A549 (cell line): ENCODE measurements at regions of chr11 and their contacts with region 1.

Region 1: GRCh38 chr11:19903620-19904069 is 191.0 kb downstream of the NAV2 start:
- DNase-seq: peak; percentile 52 to 75
- ATAC-seq: peak; percentile 80 to 93; a peak in 5 of 6 replicates
- H3K4me3 ChIP-seq: no peak overlapping the region
- H3K27ac ChIP-seq: no peak overlapping the region
- H3K4me1 ChIP-seq: no peaks in the 10 kb centered on the region
- CTCF ChIP-seq: peak; percentile 92
- EP300 ChIP-seq: no peak
- POLR2A ChIP-seq: no peak
- RAD21 ChIP-seq: peak; percentile 92 to 95

Region 2: GRCh38 chr11:19071255-19071654 is 832.4 kb before region 1 on chr11:
- CTCF ChIA-PET with region 1: interaction called, 11 read pairs
- POLR2A ChIA-PET with region 1: no interaction called
- DNase-seq: peak; percentile 77 to 90
- ATAC-seq: peak; percentile 94 to 98
- H3K4me3 ChIP-seq: 0 out of 3 replicates have a peak overlapping the region, but pooled peaks have one; percentile 18
- H3K27ac ChIP-seq: no peak overlapping the region
- H3K4me1 ChIP-seq: no peaks in the 10 kb centered on the region
- CTCF ChIP-seq: peak; percentile 99
- EP300 ChIP-seq: no peak
- POLR2A ChIP-seq: no peak
- RAD21 ChIP-seq: peak; percentile 93 to 95

Region 3: DNA sequence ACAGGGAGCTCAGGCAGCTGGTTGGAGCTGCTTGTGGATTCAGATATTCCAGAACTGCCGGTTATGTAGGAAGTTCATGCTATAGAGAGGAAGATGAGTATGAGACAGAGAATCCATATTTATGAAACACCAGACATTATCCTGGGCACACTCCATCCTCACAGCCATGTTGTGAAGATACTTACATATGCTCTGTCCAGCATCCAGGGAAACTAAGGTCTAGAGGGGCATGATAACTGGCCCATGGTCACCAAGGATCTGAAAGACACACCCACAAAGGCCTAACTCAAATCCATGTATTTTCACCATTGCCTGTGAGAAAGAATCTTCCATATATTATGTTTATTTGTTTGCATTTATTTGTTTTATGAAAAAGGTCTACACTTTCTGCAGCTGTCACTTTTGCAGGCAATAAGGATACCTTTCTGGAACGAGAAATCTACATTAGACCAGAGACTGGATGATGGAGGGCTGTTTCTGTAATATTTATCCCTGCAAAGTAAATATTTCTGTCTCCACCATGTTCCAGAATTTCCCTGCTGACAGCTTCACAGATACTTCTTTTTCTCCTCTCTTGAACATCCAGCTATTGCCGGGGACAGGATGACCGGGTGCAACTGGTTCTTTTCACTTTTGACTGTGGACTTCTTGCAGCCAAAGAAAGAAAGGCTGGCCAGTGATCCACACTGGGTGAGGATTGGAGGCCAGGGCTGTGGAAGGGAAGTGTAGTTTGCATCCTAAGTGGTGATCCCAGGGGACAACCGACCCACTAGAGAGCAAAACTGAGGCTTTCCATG is 336.9 kb before region 1 on chr11:
- CTCF ChIA-PET with region 1: interaction called, 191 read pairs
- POLR2A ChIA-PET with region 1: no interaction called
- DNase-seq: no peak
- ATAC-seq: no peak
- H3K4me3 ChIP-seq: no peak overlapping the region
- H3K27ac ChIP-seq: no peak overlapping the region
- H3K4me1 ChIP-seq: 0 out of 3 replicates have a peak, but pooled peaks cover 4% of the 10 kb centered on the region
- CTCF ChIP-seq: no peak
- EP300 ChIP-seq: no peak
- POLR2A ChIP-seq: no peak
- RAD21 ChIP-seq: no peak

Region 4: DNA sequence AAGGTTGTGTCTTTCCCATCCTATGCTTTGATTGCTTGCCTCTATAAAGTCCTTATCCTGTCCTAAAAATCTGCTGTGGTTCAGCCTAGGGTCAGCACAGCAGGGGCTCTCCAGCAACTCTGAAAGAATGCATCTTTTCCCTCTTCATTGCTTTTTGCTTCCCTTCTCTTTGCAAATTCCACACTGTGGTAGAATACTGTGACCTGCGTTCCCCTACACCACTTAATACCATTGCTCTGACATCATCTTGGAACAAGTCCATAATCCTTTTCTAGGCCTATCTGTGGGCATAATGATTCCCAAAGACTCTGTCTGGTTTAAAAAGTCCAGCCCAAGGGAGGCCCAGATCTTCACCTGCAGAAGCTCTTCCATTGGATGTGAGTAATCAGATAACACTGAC is 13.3 kb before region 1 on chr11:
- CTCF ChIA-PET with region 1: interaction called, 22 read pairs
- POLR2A ChIA-PET with region 1: no interaction called
- DNase-seq: peak in 1 of 2 experiments; percentile 8
- ATAC-seq: peak; percentile 13 to 71; a peak in 4 of 6 replicates
- H3K4me3 ChIP-seq: no peak overlapping the region
- H3K27ac ChIP-seq: no peak overlapping the region; a peak in 1 of 6 replicates
- H3K4me1 ChIP-seq: no peaks in the 10 kb centered on the region
- CTCF ChIP-seq: no peak
- EP300 ChIP-seq: no peak
- POLR2A ChIP-seq: no peak
- RAD21 ChIP-seq: no peak

Region 5: DNA sequence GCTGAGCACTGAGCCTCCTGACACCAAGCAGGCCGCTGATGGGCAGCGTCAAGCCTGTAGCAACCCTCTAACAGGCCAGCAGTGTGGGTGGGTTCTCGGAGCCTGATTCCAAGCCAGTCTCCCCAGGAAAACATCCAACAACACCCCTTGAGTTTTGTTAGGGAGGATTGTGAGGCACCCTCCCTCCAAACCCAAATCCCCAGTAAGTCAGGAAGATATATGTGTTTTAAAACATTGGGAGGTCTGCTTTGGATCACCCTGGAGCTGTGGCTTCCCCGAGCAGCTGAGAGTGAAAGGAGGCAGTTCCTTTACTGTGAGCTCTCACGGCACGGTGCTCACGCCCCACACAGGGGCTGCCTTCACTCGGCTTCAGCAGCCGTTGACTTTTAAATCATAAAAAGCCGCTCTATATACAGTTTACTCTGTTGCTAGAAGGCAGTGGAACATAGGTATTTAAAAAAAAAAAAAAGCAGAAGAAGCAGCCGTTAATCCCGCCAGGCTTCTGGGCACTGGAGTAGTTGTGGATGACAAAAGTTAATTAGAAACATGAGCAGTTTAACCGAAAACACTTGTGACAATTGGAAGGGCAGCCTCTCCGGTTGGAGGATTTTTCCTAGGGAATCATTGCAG is 27.6 kb after region 1 on chr11:
- CTCF ChIA-PET with region 1: interaction called, 25 read pairs
- POLR2A ChIA-PET with region 1: no interaction called
- DNase-seq: no peak
- ATAC-seq: no peak
- H3K4me3 ChIP-seq: no peak overlapping the region
- H3K27ac ChIP-seq: no peak overlapping the region
- H3K4me1 ChIP-seq: peaks cover 12% of the 10 kb centered on the region; the same call in 2 of the 3 replicates
- CTCF ChIP-seq: no peak
- EP300 ChIP-seq: no peak
- POLR2A ChIP-seq: no peak
- RAD21 ChIP-seq: no peak

Region 6: DNA sequence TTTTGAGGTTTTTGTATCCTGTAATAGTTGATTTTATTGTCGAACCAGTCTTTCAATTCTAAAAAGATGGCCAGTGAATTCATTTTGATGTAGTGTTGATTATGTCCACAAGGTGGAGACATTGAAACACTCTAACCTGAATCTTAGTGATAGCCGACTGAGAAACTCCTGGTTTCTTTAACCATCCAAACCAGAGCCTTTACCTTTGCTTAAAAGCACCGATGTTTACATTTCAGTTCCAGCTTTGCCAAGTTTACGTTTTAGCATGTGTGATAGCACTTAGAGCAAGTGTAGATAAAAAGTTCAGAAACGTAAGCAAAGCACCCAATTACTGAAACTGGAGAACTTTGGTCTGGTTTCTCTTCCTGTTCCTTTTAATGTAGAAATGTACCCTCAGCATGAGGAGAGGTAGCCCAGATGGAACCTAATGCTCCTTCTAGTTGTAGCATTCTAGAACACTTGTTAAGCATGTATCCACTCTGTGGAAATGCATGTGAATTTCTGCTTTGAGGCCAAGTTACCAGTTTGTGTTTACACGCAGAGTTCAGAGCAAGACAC is 48.0 kb after region 1 on chr11:
- CTCF ChIA-PET with region 1: interaction called, 12 read pairs
- POLR2A ChIA-PET with region 1: no interaction called
- DNase-seq: peak; percentile 35 to 64
- ATAC-seq: peak; percentile 56 to 58; a peak in 4 of 6 replicates
- H3K4me3 ChIP-seq: no peak overlapping the region
- H3K27ac ChIP-seq: peak overlapping the region; percentile 79 to 86
- H3K4me1 ChIP-seq: peaks cover 41% of the 10 kb centered on the region
- CTCF ChIP-seq: peak; percentile 87
- EP300 ChIP-seq: no peak
- POLR2A ChIP-seq: no peak
- RAD21 ChIP-seq: peak; percentile 79 to 89

Region 7: DNA sequence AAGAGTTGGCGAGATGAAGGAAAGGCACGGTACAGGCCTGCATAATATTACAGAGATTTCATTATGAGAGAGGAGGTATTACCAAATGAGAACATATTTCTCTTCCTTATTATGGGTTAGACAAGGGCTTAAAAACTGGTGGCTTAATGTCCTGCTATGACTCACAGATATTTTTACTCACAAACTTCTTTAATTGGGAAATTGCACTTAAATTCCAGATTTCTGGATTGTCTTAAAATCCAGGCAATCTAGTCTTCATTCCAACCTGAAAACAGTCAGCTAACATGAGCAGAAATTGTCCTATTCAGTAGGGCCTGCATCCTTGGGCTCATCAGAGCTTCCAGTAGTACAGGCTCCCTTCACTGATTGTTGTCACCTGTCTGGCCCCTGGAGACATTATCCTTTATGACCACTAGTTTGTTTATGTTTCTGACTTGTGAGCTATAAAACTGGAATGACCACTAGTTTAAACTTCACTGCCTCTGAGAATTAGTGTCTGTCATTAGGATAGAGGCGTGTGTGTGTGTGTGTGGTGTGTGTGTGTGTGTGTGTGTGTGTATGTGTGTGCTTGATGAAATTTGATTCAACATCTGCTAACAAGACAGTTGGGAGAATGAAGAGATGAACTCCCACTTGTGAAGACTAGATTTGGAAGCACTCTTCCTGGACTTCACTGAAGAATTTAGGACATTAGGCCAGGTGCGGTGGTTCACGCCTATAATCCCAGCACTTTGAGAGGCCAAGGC is 231.5 kb after region 1 on chr11:
- CTCF ChIA-PET with region 1: interaction called, 96 read pairs
- POLR2A ChIA-PET with region 1: interaction called, 3 read pairs
- DNase-seq: no peak
- ATAC-seq: no peak
- H3K4me3 ChIP-seq: no peak overlapping the region
- H3K27ac ChIP-seq: no peak overlapping the region
- H3K4me1 ChIP-seq: peaks cover 4% of the 10 kb centered on the region; the same call in 1 of the 3 replicates
- CTCF ChIP-seq: no peak
- EP300 ChIP-seq: no peak
- POLR2A ChIP-seq: no peak
- RAD21 ChIP-seq: no peak